ENCODE measurements at regions of chr1 and their contacts with region 1.

Region 1: DNA sequence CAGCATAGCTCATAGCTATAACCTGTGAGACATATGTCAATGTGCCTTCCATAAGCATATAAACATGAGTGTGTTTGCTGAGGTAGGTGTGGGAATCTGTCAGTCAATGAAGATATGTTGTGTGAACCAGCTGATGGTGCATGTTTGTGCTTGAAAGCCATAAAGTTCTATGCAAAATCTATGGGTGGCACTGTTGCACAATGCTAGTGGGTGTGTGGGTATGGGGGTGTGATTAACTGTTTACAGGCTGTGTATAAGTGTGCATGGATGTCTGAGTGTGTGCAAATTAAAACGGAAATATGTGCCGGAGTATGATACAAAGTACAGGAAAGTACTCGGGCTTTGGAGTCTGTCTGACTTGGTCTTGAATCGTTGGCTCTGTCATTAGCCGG is 1.0 kb upstream of the ATP2B4 start:
- DNase-seq: peak; percentile 54
- ATAC-seq: peak; percentile 72
- H3K4me3 ChIP-seq: 0 out of 2 replicates have a peak overlapping the region, but pooled peaks have one; percentile 59
- H3K27ac ChIP-seq: no peak overlapping the region
- H3K4me1 ChIP-seq: peaks cover 28% of the 10 kb centered on the region
- H3K27me3 ChIP-seq: peaks cover 1 to 7% of the 10 kb centered on the region in 2 experiments; a peak in 3 of 4 replicates
- CTCF ChIP-seq: peak; percentile 43 to 81 (median 62); a peak in 5 of 6 replicates
- EP300 ChIP-seq: 0 out of 4 replicates have a peak, but pooled peaks of 1 of the 2 experiments have one; percentile 10
- POLR2A ChIP-seq: no peak
- RAD21 ChIP-seq: peak; percentile 80

Region 2: GRCh38 chr1:203454986-203455471 is 170.6 kb before region 1 on chr1:
- CTCF ChIA-PET with region 1: no interaction called
- POLR2A ChIA-PET with region 1: no interaction called
- RAD21 ChIA-PET with region 1: no interaction called
- SMC1A ChIA-PET with region 1: no interaction called
- in situ Hi-C with region 1: no loop called
- intact Hi-C with region 1: no loop called
- DNase-seq: no peak
- ATAC-seq: no peak
- H3K4me3 ChIP-seq: no peak overlapping the region
- H3K27ac ChIP-seq: no peak overlapping the region
- H3K4me1 ChIP-seq: peaks cover 3% of the 10 kb centered on the region; the same call in 1 of the 2 replicates
- H3K27me3 ChIP-seq: no peaks in the 10 kb centered on the region
- CTCF ChIP-seq: no peak
- EP300 ChIP-seq: no peak
- POLR2A ChIP-seq: no peak
- RAD21 ChIP-seq: no peak

Region 3: DNA sequence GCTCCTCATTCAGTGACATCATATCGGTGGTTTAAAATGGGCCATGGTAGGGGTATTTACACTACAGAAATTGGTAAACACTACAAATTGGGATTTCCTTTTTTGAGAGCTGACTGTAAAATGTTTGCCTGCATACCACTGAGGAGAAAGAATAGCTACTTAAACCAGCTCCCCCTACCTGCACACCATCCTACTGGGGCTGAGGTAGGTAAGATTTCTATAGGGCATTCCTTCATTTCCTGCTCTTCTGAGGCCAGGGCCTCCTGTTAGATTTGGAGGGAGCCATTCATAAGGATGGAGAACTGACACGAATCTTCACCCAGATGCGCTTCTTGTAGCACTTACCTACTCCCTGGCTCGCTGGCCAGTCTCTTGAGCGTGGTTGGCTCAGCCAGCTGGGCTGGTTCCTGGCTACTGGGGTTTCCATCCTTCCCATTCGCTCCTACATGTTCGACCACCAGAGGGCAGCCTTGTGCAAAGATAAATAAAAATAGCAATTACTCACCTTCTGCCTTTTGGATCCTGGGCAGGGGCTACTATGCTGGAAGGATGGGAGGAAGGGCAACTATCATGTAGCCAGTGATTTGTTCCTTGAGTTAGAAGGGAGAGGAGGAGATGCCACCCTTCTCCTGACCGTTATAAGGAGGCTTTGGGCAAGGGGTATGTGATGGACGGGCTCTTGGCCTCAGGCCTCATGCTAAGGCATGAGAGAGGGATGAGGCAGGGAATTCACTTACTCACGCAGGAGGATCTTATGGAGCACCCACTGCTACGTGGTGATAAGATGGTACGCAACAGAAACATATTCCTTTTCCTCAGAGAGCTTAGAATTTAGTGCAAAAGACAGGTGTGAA is 121.0 kb before region 1 on chr1:
- CTCF ChIA-PET with region 1: interaction called, 19 read pairs
- POLR2A ChIA-PET with region 1: interaction called, 4 read pairs
- RAD21 ChIA-PET with region 1: interaction called, 7 read pairs
- SMC1A ChIA-PET with region 1: interaction called, 11 read pairs
- in situ Hi-C with region 1: no loop called
- intact Hi-C with region 1: loop called (anchors 5 kb)
- DNase-seq: peak; percentile 20
- ATAC-seq: peak; percentile 93
- H3K4me3 ChIP-seq: no peak overlapping the region
- H3K27ac ChIP-seq: no peak overlapping the region
- H3K4me1 ChIP-seq: no peaks in the 10 kb centered on the region
- H3K27me3 ChIP-seq: no peaks in the 10 kb centered on the region; a peak in 1 of 4 replicates
- CTCF ChIP-seq: peak; percentile 72 to 73 (median 72)
- EP300 ChIP-seq: no peak
- POLR2A ChIP-seq: no peak
- RAD21 ChIP-seq: peak; percentile 84

Region 4: DNA sequence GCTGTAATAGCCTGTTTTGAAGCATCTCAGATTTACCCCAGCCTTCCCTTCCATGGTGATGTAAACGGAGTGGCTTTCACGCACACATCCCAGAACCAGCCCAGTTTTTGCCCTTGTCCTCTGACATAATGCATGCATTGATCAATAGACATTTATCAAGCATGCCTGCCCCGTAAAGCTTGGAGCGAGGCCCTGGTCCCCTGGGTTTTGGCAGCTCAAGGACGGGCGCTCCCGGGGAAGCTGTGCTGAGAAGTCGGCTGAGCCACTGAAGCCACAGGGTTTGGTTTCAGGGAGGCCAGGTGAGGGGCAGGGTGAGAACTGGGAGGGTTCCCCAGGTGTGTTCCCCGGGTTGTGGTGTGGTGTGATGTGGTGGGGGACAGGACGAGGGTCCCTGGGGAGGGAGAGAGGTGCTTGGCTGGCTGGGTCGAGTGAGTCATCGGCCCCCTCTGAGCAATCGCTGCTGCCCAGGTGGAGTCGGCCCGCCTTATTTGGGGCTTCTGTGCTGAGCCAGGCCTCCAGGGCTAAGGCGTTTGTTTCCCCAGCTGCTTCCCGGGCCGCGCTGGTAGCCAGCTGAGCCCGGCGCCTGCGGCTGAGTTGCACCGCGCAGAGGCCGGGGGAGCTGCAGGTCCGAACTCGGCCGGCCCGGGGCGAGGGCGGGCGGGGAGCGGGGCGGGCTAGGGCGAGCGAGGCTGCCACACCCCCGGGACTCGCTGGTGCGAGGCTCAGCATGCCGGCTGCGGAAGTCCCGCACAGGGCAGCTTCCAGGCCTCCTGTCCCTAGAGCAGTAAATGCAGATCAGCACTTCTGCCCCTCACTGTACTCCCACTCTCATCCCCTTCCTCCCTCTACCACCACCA is 24.6 kb after region 1 on chr1:
- CTCF ChIA-PET with region 1: interaction called, 11 read pairs
- POLR2A ChIA-PET with region 1: interaction called, 5 read pairs
- RAD21 ChIA-PET with region 1: interaction called, 22 read pairs
- SMC1A ChIA-PET with region 1: interaction called, 30 read pairs
- in situ Hi-C with region 1: no loop called
- intact Hi-C with region 1: no loop called
- DNase-seq: no peak
- ATAC-seq: peak; percentile 86
- H3K4me3 ChIP-seq: peak overlapping the region; percentile 12; the same call in 1 of the 2 replicates
- H3K27ac ChIP-seq: no peak overlapping the region; the same call in 1 of the 2 replicates
- H3K4me1 ChIP-seq: peaks cover 37% of the 10 kb centered on the region
- H3K27me3 ChIP-seq: no peaks in the 10 kb centered on the region
- CTCF ChIP-seq: no peak
- EP300 ChIP-seq: peak in 1 of 2 experiments; percentile 16; a peak in 1 of 4 replicates
- POLR2A ChIP-seq: no peak
- RAD21 ChIP-seq: no peak

Region 5: DNA sequence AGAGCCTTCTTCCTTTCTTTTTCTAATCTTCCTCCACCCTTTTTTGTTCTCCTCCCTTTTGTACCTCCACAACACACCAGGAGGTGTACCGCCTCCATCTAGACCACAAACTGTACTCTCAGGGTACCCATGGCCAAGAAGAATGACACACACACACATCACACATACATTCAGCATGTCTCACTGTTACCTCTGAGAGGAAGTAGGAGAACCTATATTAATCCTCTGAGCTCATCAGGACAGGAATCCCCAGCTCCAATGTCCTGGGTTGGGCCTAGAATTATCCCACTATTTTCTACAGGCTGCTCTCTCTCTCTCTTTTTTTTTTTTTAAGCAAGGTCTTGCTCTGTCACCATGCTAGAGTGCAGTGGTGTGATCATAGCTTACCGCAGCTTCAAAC is 37.7 kb after region 1 on chr1:
- CTCF ChIA-PET with region 1: interaction called, 3 read pairs
- POLR2A ChIA-PET with region 1: interaction called, 4 read pairs
- RAD21 ChIA-PET with region 1: interaction called, 5 read pairs
- SMC1A ChIA-PET with region 1: interaction called, 29 read pairs
- in situ Hi-C with region 1: no loop called
- intact Hi-C with region 1: no loop called
- DNase-seq: no peak
- ATAC-seq: peak; percentile 72
- H3K4me3 ChIP-seq: no peak overlapping the region
- H3K27ac ChIP-seq: no peak overlapping the region
- H3K4me1 ChIP-seq: no peaks in the 10 kb centered on the region
- H3K27me3 ChIP-seq: peaks cover 0 to 2% of the 10 kb centered on the region in 2 experiments; a peak in 2 of 4 replicates
- CTCF ChIP-seq: no peak
- EP300 ChIP-seq: no peak
- POLR2A ChIP-seq: no peak
- RAD21 ChIP-seq: no peak

Region 6: DNA sequence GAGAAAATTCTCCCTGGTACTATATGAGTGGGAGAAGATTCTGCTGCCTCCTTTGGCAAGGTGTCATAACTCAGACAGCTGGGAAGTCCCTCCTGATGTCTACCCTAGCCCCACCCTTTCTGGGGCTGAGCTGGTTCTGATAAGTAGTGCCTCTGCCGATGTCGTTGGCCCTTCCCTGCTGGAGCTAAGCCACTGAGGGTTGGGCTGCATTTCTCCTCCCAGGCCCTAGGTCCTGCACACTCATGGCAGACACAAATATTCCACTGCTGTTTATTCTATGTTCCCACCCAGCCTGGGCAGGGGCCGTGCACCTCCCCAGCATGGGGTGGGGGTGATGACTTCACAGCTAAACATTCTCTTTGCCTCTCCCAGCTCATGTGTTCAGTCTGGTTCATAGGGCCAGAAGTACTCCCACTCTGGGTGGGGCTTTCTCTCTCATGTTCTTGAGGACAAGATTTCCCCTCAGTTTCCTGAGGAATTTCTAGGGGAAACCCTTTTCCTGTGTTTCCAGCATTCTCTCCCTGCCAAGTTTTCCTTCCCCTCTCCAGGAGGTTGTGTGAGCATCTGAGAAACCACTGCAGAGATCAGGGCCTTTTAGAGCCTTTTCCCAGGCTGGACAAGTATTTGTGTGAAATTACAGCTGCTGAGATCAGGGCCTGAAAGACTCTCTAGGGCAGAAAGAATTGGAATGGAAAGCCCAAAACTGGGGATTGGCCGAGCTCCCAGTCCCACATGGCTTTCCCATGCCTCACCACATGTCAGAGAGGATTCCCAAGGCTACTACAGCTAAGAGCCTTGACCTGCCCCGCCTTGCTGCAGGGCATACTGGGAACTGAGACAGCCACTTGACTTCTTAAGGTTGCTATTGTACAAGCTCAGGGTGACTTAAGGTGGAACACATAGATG is 67.2 kb after region 1 on chr1:
- CTCF ChIA-PET with region 1: interaction called, 143 read pairs
- POLR2A ChIA-PET with region 1: no interaction called
- RAD21 ChIA-PET with region 1: interaction called, 7 read pairs
- SMC1A ChIA-PET with region 1: interaction called, 84 read pairs
- in situ Hi-C with region 1: no loop called
- intact Hi-C with region 1: no loop called
- DNase-seq: no peak
- ATAC-seq: peak; percentile 37; the same call in 2 of the 3 replicates
- H3K4me3 ChIP-seq: no peak overlapping the region
- H3K27ac ChIP-seq: no peak overlapping the region
- H3K4me1 ChIP-seq: no peaks in the 10 kb centered on the region
- H3K27me3 ChIP-seq: peaks cover 0 to 2% of the 10 kb centered on the region in 2 experiments; a peak in 2 of 4 replicates
- CTCF ChIP-seq: no peak
- EP300 ChIP-seq: no peak
- POLR2A ChIP-seq: no peak
- RAD21 ChIP-seq: no peak

Region 7: GRCh38 chr1:203825778-203826574 is 200.4 kb after region 1 on chr1:
- CTCF ChIA-PET with region 1: no interaction called
- POLR2A ChIA-PET with region 1: interaction called, 15 read pairs
- RAD21 ChIA-PET with region 1: no interaction called
- SMC1A ChIA-PET with region 1: interaction called, 3 read pairs
- in situ Hi-C with region 1: no loop called
- intact Hi-C with region 1: no loop called
- DNase-seq: no peak
- ATAC-seq: no peak
- H3K4me3 ChIP-seq: no peak overlapping the region
- H3K27ac ChIP-seq: no peak overlapping the region
- H3K4me1 ChIP-seq: no peaks in the 10 kb centered on the region
- H3K27me3 ChIP-seq: no peaks in the 10 kb centered on the region
- CTCF ChIP-seq: no peak
- EP300 ChIP-seq: no peak
- POLR2A ChIP-seq: no peak
- RAD21 ChIP-seq: no peak

Measured in GM12878 (cell line).